CD4-positive, alpha-beta T cell (primary cell): ENCODE measurements at regions of chr14 and their contacts with region 1.

Region 1: DNA sequence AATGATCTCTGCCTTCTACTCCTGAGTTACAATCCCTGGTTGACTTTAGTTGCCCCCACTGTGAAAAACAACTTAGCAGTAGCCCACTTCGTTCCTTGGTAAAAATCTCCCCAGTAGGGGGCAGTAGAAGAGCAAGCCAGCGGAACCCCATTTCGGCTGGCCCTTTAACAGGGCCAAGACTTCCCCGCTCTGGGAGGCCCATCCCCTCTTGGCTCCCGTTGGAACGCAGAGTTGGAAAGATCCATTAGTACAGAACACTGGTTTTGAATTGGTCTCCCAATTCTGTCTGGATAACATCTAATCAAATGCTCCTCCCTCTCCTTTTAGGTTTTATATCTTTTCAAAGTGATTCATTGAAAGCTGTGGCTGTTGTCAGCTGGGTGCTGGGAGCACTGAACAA is 1133.3 kb downstream of the BCL11B start:
- DNase-seq: peak; percentile 48 to 88 (median 64)
- ATAC-seq: peak; percentile 47
- H3K4me3 ChIP-seq: peak overlapping the region; percentile 41
- H3K4me3 Mint-ChIP-seq: peak overlapping the region; percentile 80
- H3K27ac ChIP-seq: peak overlapping the region; percentile 56 to 71
- H3K27ac Mint-ChIP-seq: peak overlapping the region; percentile 92
- H3K4me1 ChIP-seq: peaks cover 65% of the 10 kb centered on the region
- H3K4me1 Mint-ChIP-seq: peaks cover 99% of the 10 kb centered on the region
- H3K27me3 ChIP-seq: no peaks in the 10 kb centered on the region
- H3K27me3 Mint-ChIP-seq: no peaks in the 10 kb centered on the region
- CTCF ChIP-seq: peak; percentile 94

Region 2: DNA sequence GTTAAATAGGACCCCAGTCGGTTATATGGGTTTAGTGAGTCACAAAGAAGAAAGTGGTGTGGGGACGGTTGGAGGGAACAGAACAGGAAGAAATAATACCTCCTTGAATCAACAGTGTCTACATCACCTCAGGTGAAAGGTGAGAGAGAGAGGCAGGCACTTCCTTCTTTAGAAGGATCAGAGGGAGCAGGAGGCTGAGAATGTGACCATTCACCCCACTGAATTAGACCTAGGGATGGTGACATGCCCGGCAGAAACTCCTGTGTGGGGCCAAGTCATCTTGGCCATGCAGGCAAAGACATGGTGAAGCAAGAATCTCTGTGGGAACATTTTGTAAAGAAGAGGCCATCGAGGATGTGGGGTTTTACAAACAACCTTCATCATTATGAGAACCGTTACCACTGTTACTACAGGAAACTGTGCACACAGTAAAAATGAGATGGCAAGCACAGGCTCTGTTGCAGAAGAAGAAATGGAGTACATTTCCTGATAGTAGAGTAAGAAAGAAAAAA is 144.6 kb before region 1 on chr14:
- CTCF ChIA-PET with region 1: interaction called, 3 read pairs
- POLR2A ChIA-PET with region 1: interaction called, 16 read pairs
- intact Hi-C with region 1: no loop called
- DNase-seq: peak in 9 of 14 experiments; percentile 14 to 87 (median 50)
- ATAC-seq: peak; percentile 81
- H3K4me3 ChIP-seq: no peak overlapping the region
- H3K4me3 Mint-ChIP-seq: peak overlapping the region; percentile 43
- H3K27ac ChIP-seq: peak overlapping the region; percentile 68 to 75
- H3K27ac Mint-ChIP-seq: peak overlapping the region; percentile 93
- H3K4me1 ChIP-seq: peaks cover 51% of the 10 kb centered on the region
- H3K4me1 Mint-ChIP-seq: peaks cover 88% of the 10 kb centered on the region
- H3K27me3 ChIP-seq: no peaks in the 10 kb centered on the region
- H3K27me3 Mint-ChIP-seq: no peaks in the 10 kb centered on the region
- CTCF ChIP-seq: no peak

Region 3: DNA sequence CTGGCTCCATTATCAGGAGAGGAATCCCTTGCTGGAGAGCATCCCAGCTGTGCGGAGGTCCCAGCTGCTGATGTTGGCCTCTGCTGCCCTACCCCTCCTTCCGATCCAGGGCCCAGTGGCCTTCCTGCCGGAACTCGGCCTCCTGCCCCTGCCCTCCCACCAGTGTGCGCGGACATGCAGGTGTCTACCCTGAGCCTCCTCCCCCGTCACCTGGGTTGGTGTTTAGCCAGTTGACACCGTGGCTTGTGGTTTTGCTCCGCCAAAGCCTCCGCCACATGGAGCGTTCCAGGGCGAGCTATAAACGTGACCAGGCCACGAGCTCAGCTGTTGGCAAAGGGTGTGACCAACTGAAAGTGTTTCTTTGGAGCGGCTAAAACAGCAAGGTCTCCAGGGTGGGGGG is 29.0 kb after region 1 on chr14:
- CTCF ChIA-PET with region 1: interaction called, 3 read pairs
- POLR2A ChIA-PET with region 1: interaction called, 183 read pairs
- intact Hi-C with region 1: loop called in 1 of 2 experiments (anchors 2 kb)
- DNase-seq: peak in 6 of 14 experiments; percentile 33 to 66 (median 56)
- ATAC-seq: peak; percentile 43
- H3K4me3 ChIP-seq: peak overlapping the region; percentile 22
- H3K4me3 Mint-ChIP-seq: peak overlapping the region; percentile 64
- H3K27ac ChIP-seq: peak overlapping the region; percentile 64 to 68
- H3K27ac Mint-ChIP-seq: peak overlapping the region; percentile 93
- H3K4me1 ChIP-seq: peaks cover 80% of the 10 kb centered on the region
- H3K4me1 Mint-ChIP-seq: peaks cover 99% of the 10 kb centered on the region
- H3K27me3 ChIP-seq: no peaks in the 10 kb centered on the region
- H3K27me3 Mint-ChIP-seq: no peaks in the 10 kb centered on the region
- CTCF ChIP-seq: no peak

Region 4: GRCh38 chr14:98189062-98189461 is 50.4 kb after region 1 on chr14:
- CTCF ChIA-PET with region 1: interaction called, 10 read pairs
- POLR2A ChIA-PET with region 1: interaction called, 324 read pairs
- intact Hi-C with region 1: loop called (anchors 2 to 5 kb)
- DNase-seq: peak in 5 of 14 experiments; percentile 51 to 85 (median 55)
- ATAC-seq: peak; percentile 31
- H3K4me3 ChIP-seq: peak overlapping the region; percentile 24
- H3K4me3 Mint-ChIP-seq: peak overlapping the region; percentile 80
- H3K27ac ChIP-seq: peak overlapping the region; percentile 76 to 87
- H3K27ac Mint-ChIP-seq: peak overlapping the region; percentile 93
- H3K4me1 ChIP-seq: peaks cover 92% of the 10 kb centered on the region
- H3K4me1 Mint-ChIP-seq: peaks cover 100% of the 10 kb centered on the region
- H3K27me3 ChIP-seq: no peaks in the 10 kb centered on the region
- H3K27me3 Mint-ChIP-seq: no peaks in the 10 kb centered on the region
- CTCF ChIP-seq: no peak

Region 5: GRCh38 chr14:98477935-98478334 is 339.3 kb after region 1 on chr14:
- CTCF ChIA-PET with region 1: no interaction called
- POLR2A ChIA-PET with region 1: no interaction called
- intact Hi-C with region 1: no loop called
- DNase-seq: no peak
- ATAC-seq: no peak
- H3K4me3 ChIP-seq: no peak overlapping the region
- H3K4me3 Mint-ChIP-seq: no peak overlapping the region
- H3K27ac ChIP-seq: no peak overlapping the region
- H3K27ac Mint-ChIP-seq: no peak overlapping the region
- H3K4me1 ChIP-seq: no peaks in the 10 kb centered on the region
- H3K4me1 Mint-ChIP-seq: peaks cover 4% of the 10 kb centered on the region
- H3K27me3 ChIP-seq: no peaks in the 10 kb centered on the region
- H3K27me3 Mint-ChIP-seq: no peaks in the 10 kb centered on the region
- CTCF ChIP-seq: no peak

Region 6: DNA sequence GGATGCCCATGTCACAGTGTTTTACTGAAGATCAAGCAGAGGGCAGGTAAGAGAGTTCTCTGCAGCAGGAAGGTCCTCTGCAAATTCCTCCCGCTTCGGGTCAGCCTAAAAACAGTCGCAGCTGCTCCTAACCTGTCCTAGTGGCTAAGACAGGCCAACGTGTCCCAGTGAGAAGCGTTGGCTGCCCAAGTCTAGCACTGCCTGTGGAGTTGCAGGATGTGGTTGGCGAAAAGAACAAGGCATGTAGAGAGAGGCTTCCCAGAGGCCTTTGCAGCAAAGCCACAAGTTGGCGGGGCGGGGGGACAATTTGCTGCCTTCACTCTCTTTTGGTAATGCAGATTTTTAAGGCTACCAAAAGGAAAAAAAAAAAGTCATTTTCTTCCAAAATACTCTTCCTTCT is 793.2 kb after region 1 on chr14:
- CTCF ChIA-PET with region 1: no interaction called
- POLR2A ChIA-PET with region 1: interaction called, 3 read pairs
- intact Hi-C with region 1: loop called in 1 of 2 experiments (anchors 5 kb)
- DNase-seq: peak; percentile 56 to 93 (median 79)
- ATAC-seq: peak; percentile 95
- H3K4me3 ChIP-seq: peak overlapping the region; percentile 36
- H3K4me3 Mint-ChIP-seq: peak overlapping the region; percentile 67
- H3K27ac ChIP-seq: peak overlapping the region; percentile 50 to 52
- H3K27ac Mint-ChIP-seq: peak overlapping the region; percentile 87
- H3K4me1 ChIP-seq: peaks cover 80% of the 10 kb centered on the region
- H3K4me1 Mint-ChIP-seq: peaks cover 98% of the 10 kb centered on the region
- H3K27me3 ChIP-seq: no peaks in the 10 kb centered on the region
- H3K27me3 Mint-ChIP-seq: no peaks in the 10 kb centered on the region
- CTCF ChIP-seq: no peak

Region 7: DNA sequence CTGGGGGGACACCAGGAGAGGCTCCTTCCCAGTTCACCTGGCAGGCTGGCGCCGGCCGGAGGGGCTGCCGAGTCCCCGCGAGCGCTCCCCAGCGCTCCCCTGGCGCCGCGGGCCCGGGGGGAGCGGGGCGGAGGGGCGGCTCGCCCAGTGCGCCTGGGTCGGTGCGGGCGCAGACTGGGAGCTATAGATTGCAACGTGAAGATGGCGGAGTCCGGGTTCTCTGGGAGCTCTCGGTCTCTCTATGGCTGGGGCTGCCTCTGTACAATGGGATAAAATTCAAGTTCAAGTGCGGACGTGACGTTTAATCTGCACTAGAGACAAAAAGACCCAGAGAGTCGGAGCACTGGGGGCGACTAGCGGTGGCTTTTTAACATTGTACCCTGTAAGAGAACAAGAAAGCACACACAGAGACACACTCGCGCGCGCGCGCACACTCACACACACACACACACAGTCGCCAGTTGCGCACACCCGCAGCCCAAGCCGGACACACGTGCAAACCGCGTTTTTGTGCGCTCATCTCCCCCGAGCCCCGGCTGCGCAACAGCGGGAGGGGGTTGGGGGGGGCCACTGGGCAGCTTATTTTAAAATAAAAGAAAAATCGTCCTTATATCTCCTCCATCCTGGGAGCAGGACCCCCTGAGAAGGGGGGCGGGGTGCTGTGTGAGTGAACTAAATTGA is 1133.4 kb after region 1 on chr14 and contains the start of gene BCL11B:
- CTCF ChIA-PET with region 1: interaction called, 17 read pairs
- POLR2A ChIA-PET with region 1: interaction called, 253 read pairs
- intact Hi-C with region 1: loop called (anchors 1 to 2 kb)
- DNase-seq: peak; percentile 78 to 96 (median 88)
- ATAC-seq: peak; percentile 76
- H3K4me3 ChIP-seq: peak within 1 kb of the TSS; percentile 97
- H3K4me3 Mint-ChIP-seq: peak within 1 kb of the TSS; percentile 100
- H3K27ac ChIP-seq: peak within 1 kb of the TSS; percentile 18 to 79
- H3K27ac Mint-ChIP-seq: peak within 1 kb of the TSS; percentile 99
- H3K4me1 ChIP-seq: peaks cover 36% of the 10 kb centered on the region
- H3K4me1 Mint-ChIP-seq: peaks cover 48% of the 10 kb centered on the region
- H3K27me3 ChIP-seq: no peaks in the 10 kb centered on the region
- H3K27me3 Mint-ChIP-seq: peaks cover 5% of the 10 kb centered on the region
- CTCF ChIP-seq: peak; percentile 71
- total RNA-seq, gene BCL11B: 244 to 254 TPM